Posterior vena cava (tissue), 2 donors: ENCODE measurements at regions of chr22 and their contacts with region 1.

Region 1: DNA sequence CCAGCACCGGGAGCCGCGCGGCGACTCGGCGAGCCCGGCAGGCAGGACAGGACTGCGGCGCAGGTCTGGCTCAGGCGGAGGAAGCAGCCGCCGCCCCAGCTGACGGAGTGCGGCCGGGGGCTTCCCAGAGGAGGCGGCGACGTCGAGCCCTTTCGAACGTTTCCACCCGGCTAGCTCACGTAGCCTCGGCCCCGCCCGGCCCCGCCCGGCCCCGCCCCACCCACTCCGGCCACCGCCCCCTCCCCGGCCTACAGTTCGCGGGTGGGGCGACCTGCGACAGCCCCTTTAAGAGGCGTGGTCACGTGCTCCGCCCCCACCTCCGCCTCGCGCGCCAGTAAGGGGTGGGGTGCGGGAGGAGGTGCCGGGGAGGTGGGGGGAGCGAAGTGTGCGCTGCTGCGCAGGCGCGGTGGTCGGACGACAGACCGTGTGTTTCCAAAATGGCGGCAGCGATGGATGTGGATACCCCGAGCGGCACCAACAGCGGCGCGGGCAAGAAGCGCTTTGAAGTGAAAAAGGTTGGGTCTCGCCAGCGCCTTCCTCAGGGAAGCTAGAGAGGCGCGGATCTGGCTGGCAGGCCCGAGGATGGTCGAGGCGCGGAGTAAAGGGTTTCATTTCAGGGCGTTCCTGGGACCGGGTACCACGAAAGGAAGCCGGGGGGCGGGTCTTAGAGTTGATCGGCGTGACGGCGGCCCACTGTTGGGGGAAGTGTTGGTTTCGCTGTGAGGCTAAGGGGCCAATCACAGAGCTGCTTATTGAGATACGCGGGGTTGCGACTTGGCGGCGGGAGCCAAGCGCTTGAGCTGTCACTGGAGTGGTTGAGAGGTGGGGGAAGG is at the start of gene RBX1:
- DNase-seq: peak; percentile 100
- total RNA-seq, gene RBX1: 54.6 to 56.3 TPM

Region 2: DNA sequence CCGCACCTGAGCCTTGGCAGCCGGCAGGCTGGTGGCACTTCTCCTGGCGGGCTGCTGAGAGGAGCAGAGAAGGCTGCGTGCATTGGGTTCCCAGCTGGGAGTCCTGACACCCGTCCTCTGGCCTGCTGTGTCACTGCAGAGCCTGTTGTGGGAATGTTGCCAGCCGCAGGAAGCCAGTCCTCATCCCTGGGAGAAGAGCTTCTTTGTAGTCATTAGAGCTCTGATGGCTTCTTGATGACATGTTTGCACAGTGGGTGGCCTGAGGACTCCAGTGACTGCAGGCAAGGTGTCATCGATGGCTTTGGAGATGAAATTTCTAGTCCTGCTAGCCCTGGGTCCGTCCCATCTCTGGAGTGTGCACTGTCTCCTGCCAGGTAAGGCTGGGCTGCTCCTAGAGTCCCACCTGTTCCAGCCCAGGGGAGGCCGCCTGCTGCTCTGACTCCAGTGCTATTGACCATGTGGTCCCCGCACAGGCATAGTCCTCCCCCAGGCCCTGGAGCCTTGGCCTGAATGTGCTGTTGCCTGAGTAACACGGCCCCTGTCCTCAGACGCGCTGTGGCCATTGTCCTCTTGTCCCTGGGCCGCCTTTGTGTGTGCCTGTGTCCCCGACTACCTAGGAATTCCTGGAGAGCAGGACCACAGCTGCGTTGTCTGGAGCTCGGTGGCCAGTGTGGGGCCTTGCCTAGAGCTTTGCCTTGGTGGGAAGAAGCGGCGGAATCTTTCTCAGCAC is 1251.4 kb before region 1 on chr22:
- intact Hi-C with region 1: no loop called
- DNase-seq: no peak

Region 3: DNA sequence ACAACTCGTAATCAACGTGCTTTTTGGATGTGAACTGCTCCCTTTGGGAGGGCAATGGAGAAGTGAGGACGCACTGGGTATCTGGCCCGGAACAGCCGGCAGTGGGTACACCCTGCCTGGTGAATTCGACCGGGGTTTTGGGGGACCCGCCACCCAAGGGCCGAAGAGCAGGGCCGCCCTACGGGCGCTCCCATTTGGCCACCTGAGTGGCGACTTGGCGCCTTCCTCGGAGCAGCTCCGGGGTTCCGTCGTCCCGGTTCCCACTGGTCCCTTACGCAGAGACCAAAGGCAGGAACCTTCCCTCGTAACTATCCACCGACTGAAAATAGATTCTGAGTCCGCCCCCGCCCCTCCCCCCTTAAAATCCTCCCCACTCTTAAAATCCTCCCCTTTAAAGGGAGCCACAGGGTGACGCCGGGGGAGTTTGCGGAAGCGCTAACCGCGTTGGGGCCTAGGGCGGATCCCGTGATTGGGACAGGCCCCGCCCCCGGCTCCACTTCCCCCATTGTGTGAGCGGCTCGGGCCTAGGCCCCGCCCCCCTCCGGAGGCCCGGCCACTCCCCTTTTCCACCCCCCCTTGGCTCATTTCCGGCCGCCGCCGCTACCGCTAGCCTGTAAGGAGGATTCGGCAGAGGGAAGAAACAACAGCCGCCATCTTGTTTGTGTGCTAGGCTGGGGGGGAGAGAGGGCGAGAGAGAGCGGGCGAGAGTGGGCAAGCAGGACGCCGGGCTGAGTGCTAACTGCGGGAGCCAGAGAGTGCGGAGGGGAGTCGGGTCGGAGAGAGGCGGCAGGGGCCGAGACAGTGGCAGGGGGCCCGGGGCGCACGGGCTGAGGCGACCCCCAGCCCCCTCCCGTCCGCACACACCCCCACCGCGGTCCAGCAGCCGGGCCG is 140.2 kb after region 1 on chr22:
- intact Hi-C with region 1: loop called (anchors 1 to 2 kb)
- DNase-seq: peak; percentile 100